ENCODE measurements at regions of chr6 and their contacts with region 1.

Region 1: GRCh38 chr6:22647719-22648118 is 78.4 kb downstream of the HDGFL1 start:
- DNase-seq: no peak
- ATAC-seq: no peak
- H3K4me3 ChIP-seq: no peak overlapping the region
- H3K27ac ChIP-seq: no peak overlapping the region
- H3K4me1 ChIP-seq: no peaks in the 10 kb centered on the region
- H3K27me3 ChIP-seq: no peaks in the 10 kb centered on the region
- CTCF ChIP-seq: no peak

Region 2: DNA sequence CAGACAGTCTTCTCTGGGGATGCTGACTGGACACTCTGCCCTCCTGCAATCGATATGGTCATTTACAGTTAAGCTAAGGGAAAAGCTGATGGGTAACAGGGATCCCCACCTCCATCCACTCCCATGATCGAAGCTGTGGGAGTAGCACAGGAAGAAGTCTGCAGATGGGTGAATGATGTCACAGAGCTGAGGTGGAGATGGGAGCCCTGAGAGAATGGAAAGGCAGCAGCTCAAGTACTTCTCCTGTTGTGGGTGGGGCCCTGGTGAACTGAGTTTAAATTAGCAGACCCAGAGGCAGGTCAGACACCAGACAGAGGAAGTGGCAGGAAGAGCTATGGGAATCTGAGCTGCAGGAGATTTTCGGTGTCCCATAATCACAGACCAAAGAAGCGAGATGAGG is 49.4 kb before region 1 on chr6:
- CTCF ChIA-PET with region 1: no interaction called
- POLR2A ChIA-PET with region 1: interaction called, 13 read pairs
- intact Hi-C with region 1: no loop called
- DNase-seq: no peak
- ATAC-seq: no peak
- H3K4me3 ChIP-seq: no peak overlapping the region
- H3K27ac ChIP-seq: no peak overlapping the region
- H3K4me1 ChIP-seq: peaks cover 17% of the 10 kb centered on the region
- H3K27me3 ChIP-seq: no peaks in the 10 kb centered on the region
- CTCF ChIP-seq: no peak

Region 3: GRCh38 chr6:22622351-22622750 is 25.4 kb before region 1 on chr6:
- CTCF ChIA-PET with region 1: no interaction called
- POLR2A ChIA-PET with region 1: no interaction called
- intact Hi-C with region 1: no loop called
- DNase-seq: no peak
- ATAC-seq: no peak
- H3K4me3 ChIP-seq: no peak overlapping the region
- H3K27ac ChIP-seq: no peak overlapping the region
- H3K4me1 ChIP-seq: no peaks in the 10 kb centered on the region
- H3K27me3 ChIP-seq: no peaks in the 10 kb centered on the region
- CTCF ChIP-seq: no peak

Region 4: GRCh38 chr6:22765015-22765414 is 117.3 kb after region 1 on chr6:
- CTCF ChIA-PET with region 1: no interaction called
- POLR2A ChIA-PET with region 1: no interaction called
- intact Hi-C with region 1: no loop called
- DNase-seq: peak; percentile 59
- ATAC-seq: peak; percentile 49
- H3K4me3 ChIP-seq: no peak overlapping the region
- H3K27ac ChIP-seq: peak overlapping the region; percentile 15; the same call in 1 of the 2 replicates
- H3K4me1 ChIP-seq: peaks cover 26% of the 10 kb centered on the region
- H3K27me3 ChIP-seq: no peaks in the 10 kb centered on the region
- CTCF ChIP-seq: no peak

Region 5: GRCh38 chr6:22804620-22805261 is 157.0 kb after region 1 on chr6:
- CTCF ChIA-PET with region 1: no interaction called
- POLR2A ChIA-PET with region 1: no interaction called
- intact Hi-C with region 1: no loop called
- DNase-seq: no peak
- ATAC-seq: no peak
- H3K4me3 ChIP-seq: no peak overlapping the region
- H3K27ac ChIP-seq: no peak overlapping the region
- H3K4me1 ChIP-seq: no peaks in the 10 kb centered on the region
- H3K27me3 ChIP-seq: no peaks in the 10 kb centered on the region
- CTCF ChIP-seq: no peak

Measured in PC-3 (cell line).